Naive thymus-derived CD4-positive, alpha-beta T cell (primary cell): ENCODE measurements at regions of chr15 and their contacts with region 1.

Region 1: DNA sequence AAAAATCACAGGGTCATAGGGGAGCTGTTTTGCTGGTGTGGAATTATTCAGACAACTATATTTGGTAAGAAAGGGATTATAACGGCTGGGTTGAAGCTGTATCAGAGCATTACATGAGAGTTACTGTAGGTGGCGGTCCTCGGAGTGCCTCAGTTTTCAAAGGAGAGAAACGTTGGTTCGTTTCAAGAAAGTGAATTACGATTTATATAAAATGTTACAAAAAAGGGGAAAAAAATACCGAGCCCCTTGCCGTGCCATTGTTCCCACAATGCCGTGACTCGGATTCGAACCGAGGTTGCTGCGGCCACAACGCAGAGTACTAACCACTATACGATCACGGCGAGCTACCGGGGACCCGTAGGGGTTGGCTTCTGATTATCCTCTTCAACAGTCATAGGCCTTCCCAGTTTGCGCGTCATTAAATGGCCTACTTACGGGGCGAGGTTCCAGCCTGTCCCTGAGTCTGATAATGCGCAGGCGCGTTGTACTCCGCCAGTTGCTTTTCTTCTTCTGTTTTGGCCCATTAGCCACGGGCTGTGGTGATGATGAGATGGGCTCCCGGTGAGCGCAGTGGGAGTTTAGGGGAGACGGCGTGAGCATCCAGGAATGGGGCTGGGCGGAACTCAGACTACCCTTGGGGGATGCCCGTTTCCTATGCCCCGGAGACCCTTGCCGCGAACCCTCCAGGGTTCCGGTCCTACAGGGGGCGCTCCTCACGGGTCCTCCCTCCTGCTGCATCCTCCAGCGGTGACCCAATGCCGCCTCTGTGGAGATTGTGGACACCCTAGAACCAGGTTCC is 10.8 kb upstream of the SHF start:
- DNase-seq: peak; percentile 82 to 98 (median 98)
- ATAC-seq: peak; percentile 80
- H3K4me3 ChIP-seq: peak overlapping the region; percentile 69
- H3K4me3 Mint-ChIP-seq: no peak overlapping the region
- H3K27ac ChIP-seq: peak overlapping the region; percentile 90
- H3K27ac Mint-ChIP-seq: no peak overlapping the region
- H3K4me1 ChIP-seq: peaks cover 9 to 10% of the 10 kb centered on the region in 2 donors
- H3K4me1 Mint-ChIP-seq: peaks cover 0 to 16% (median 8%) of the 10 kb centered on the region in 7 donors
- H3K27me3 ChIP-seq: no peaks in the 10 kb centered on the region
- H3K27me3 Mint-ChIP-seq: peaks cover 0 to 11% (median 0%) of the 10 kb centered on the region in 5 donors

Region 2: DNA sequence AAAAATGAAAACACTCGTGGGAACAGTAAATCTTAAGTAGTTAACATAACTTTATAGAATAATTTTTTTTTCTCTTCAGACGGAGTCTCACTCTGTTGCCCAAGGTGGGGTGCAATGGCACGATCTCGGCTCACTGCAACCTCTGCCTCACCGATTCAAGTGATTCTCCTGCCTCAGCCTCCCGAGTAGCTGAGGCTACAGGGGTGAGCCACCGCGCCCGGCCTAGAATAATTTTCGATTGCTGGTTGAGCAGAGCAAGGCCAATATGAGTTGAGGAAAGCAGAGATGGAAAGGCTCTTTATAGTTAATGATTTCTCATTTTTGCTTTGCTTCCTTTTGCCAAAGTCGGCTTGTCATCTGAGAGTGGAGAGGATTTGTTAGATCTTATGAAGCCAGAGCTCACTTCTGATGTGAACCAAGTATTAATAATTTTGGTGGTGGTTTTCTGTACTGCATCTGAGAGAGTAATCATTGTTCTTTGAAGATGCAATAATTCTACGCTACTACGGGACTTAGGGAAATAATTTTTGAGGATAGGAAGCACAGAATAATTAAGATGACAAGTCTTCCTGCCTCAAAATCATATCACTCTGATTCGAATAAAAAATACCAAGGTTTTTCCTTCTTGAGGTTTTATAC is 911.6 kb before region 1 on chr15:
- CTCF ChIA-PET with region 1: no interaction called
- POLR2A ChIA-PET with region 1: no interaction called
- intact Hi-C with region 1: loop called (anchors 2 kb)
- DNase-seq: peak in 4 of 9 donors; percentile 9 to 30 (median 19)
- ATAC-seq: no peak
- H3K4me3 ChIP-seq: peak overlapping the region; percentile 85
- H3K4me3 Mint-ChIP-seq: peak overlapping the region; percentile 90 to 99 (median 96)
- H3K27ac ChIP-seq: peak overlapping the region; percentile 86
- H3K27ac Mint-ChIP-seq: peak overlapping the region; percentile 95 to 100 (median 99)
- H3K4me1 ChIP-seq: peaks cover 12 to 13% of the 10 kb centered on the region in 2 donors
- H3K4me1 Mint-ChIP-seq: peaks cover 30 to 50% (median 45%) of the 10 kb centered on the region in 7 donors
- H3K27me3 ChIP-seq: no peaks in the 10 kb centered on the region
- H3K27me3 Mint-ChIP-seq: peaks cover 0 to 17% (median 3%) of the 10 kb centered on the region in 5 donors

Region 3: GRCh38 chr15:44663409-44664308 is 534.9 kb before region 1 on chr15 and contains the start of gene SPG11:
- CTCF ChIA-PET with region 1: no interaction called
- POLR2A ChIA-PET with region 1: interaction called, 4 read pairs
- intact Hi-C with region 1: loop called (anchors 1 to 2 kb)
- DNase-seq: peak; percentile 81 to 95 (median 94)
- ATAC-seq: peak; percentile 91
- H3K4me3 ChIP-seq: peak within 1 kb of the TSS; percentile 85
- H3K4me3 Mint-ChIP-seq: peak within 1 kb of the TSS; percentile 84 to 99 (median 98)
- H3K27ac ChIP-seq: peak within 1 kb of the TSS; percentile 91
- H3K27ac Mint-ChIP-seq: peak within 1 kb of the TSS; percentile 94 to 99 (median 96)
- H3K4me1 ChIP-seq: peaks cover 35 to 53% of the 10 kb centered on the region in 2 donors
- H3K4me1 Mint-ChIP-seq: peaks cover 41 to 77% (median 69%) of the 10 kb centered on the region in 7 donors
- H3K27me3 ChIP-seq: no peaks in the 10 kb centered on the region
- H3K27me3 Mint-ChIP-seq: no peaks in the 10 kb centered on the region
- total RNA-seq, gene SPG11: 92.2 to 137 (median 131) TPM

Region 4: DNA sequence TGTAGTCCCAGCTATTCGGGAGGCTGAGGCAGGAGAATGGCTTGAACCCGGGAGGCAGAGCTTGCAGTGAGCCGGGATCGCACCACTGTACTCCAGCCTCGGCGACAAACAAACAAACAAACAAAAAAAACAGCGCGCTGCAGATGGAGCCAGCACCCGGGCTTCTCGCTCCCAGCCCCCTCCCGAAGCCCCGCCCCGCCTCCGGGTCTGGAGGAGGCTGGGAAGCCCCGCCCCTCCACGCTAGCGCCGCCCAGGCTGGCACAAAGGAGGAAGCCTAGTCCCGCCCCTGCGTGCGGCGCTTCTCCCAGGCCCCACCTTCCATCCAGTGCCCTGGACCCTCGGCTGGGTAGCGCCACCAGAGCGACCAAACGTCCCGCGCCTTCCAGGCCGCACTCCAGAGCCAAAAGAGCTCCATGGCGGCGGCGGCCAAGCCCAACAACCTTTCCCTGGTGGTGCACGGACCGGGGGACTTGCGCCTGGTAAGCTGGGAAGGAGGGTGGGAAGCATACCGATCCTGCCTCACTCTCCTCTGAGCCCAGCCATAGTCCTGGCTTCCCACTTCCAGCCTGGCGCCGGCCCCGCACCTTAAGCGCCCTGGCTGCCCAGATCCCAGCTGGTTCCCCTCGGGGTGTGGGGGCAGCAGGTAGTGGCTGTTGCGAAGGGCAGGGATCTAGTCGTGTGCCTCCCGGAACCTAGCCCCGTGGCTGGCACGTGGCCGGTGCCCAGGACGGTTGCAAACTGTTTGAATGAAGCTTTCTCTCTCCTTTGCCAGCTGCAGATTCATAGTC is 175.5 kb before region 1 on chr15 and contains the start of gene SORD:
- CTCF ChIA-PET with region 1: no interaction called
- POLR2A ChIA-PET with region 1: interaction called, 3 read pairs
- intact Hi-C with region 1: loop called in 1 of 2 experiments (anchors 2 kb)
- DNase-seq: peak; percentile 77 to 96 (median 83)
- ATAC-seq: peak; percentile 99
- H3K4me3 ChIP-seq: peak within 1 kb of the TSS; percentile 83
- H3K4me3 Mint-ChIP-seq: peak within 1 kb of the TSS; percentile 80 to 93 (median 88)
- H3K27ac ChIP-seq: peak within 1 kb of the TSS; percentile 42
- H3K27ac Mint-ChIP-seq: peak within 1 kb of the TSS; percentile 14 to 86 (median 60)
- H3K4me1 ChIP-seq: peaks cover 8 to 10% of the 10 kb centered on the region in 2 donors
- H3K4me1 Mint-ChIP-seq: peaks cover 12 to 32% (median 17%) of the 10 kb centered on the region in 7 donors
- H3K27me3 ChIP-seq: no peaks in the 10 kb centered on the region
- H3K27me3 Mint-ChIP-seq: peaks cover 12 to 28% (median 21%) of the 10 kb centered on the region in 5 donors
- total RNA-seq, gene SORD: 2.7 to 7.8 (median 6.4) TPM

Region 5: GRCh38 chr15:45166834-45167630 is 31.5 kb before region 1 on chr15:
- CTCF ChIA-PET with region 1: interaction called, 15 read pairs
- POLR2A ChIA-PET with region 1: interaction called, 77 read pairs
- intact Hi-C with region 1: loop called (anchors 1 kb)
- DNase-seq: peak; percentile 58 to 82 (median 78)
- ATAC-seq: peak; percentile 95
- H3K4me3 ChIP-seq: peak overlapping the region; percentile 70
- H3K4me3 Mint-ChIP-seq: peak overlapping the region; percentile 62 to 86 (median 74)
- H3K27ac ChIP-seq: peak overlapping the region; percentile 95
- H3K27ac Mint-ChIP-seq: peak overlapping the region; percentile 62 to 92 (median 83)
- H3K4me1 ChIP-seq: peaks cover 10 to 13% of the 10 kb centered on the region in 2 donors
- H3K4me1 Mint-ChIP-seq: peaks cover 0 to 31% (median 18%) of the 10 kb centered on the region in 7 donors
- H3K27me3 ChIP-seq: no peaks in the 10 kb centered on the region
- H3K27me3 Mint-ChIP-seq: no peaks in the 10 kb centered on the region

Region 6: DNA sequence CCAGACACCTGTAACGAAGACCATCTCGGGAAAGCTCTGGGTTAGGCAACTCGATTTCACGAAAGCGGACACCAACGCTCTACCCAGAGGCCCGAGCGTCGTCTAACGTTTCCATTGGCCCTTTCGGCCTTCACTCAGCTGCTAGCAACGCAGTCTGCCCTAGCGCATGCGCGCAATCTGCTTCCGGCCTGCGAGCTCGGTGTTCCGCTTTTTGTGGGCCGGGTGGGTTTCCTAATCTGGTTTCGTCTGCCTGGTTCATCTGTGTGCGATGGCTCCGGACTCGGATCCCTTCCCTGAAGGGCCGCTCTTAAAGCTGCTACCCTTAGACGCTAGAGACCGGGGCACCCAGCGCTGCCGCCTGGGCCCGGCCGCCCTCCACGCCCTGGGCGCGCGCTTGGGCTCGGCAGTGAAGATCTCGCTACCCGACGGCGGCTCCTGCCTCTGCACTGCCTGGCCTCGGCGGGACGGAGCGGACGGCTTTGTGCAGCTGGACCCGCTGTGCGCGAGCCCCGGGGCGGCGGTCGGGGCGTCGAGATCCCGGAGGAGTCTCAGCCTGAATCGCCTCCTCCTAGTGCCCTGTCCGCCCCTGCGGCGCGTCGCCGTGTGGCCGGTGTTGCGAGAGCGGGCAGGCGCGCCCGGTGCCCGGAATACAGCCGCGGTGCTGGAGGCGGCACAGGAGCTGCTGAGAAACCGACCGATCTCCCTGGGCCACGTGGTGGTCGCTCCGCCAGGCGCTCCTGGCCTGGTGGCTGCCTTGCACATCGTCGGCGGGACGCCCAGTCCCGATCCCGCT is 203.8 kb after region 1 on chr15:
- CTCF ChIA-PET with region 1: interaction called, 7 read pairs
- POLR2A ChIA-PET with region 1: interaction called, 19 read pairs
- intact Hi-C with region 1: loop called (anchors 1 kb)
- DNase-seq: peak; percentile 84 to 98 (median 96)
- ATAC-seq: peak; percentile 96
- H3K4me3 ChIP-seq: peak overlapping the region; percentile 86
- H3K4me3 Mint-ChIP-seq: peak overlapping the region; percentile 88 to 99 (median 96)
- H3K27ac ChIP-seq: peak overlapping the region; percentile 83
- H3K27ac Mint-ChIP-seq: peak overlapping the region; percentile 91 to 98 (median 95)
- H3K4me1 ChIP-seq: peaks cover 8 to 22% of the 10 kb centered on the region in 2 donors
- H3K4me1 Mint-ChIP-seq: peaks cover 18 to 40% (median 38%) of the 10 kb centered on the region in 7 donors
- H3K27me3 ChIP-seq: no peaks in the 10 kb centered on the region
- H3K27me3 Mint-ChIP-seq: peaks cover 0 to 14% (median 0%) of the 10 kb centered on the region in 5 donors

Region 7: DNA sequence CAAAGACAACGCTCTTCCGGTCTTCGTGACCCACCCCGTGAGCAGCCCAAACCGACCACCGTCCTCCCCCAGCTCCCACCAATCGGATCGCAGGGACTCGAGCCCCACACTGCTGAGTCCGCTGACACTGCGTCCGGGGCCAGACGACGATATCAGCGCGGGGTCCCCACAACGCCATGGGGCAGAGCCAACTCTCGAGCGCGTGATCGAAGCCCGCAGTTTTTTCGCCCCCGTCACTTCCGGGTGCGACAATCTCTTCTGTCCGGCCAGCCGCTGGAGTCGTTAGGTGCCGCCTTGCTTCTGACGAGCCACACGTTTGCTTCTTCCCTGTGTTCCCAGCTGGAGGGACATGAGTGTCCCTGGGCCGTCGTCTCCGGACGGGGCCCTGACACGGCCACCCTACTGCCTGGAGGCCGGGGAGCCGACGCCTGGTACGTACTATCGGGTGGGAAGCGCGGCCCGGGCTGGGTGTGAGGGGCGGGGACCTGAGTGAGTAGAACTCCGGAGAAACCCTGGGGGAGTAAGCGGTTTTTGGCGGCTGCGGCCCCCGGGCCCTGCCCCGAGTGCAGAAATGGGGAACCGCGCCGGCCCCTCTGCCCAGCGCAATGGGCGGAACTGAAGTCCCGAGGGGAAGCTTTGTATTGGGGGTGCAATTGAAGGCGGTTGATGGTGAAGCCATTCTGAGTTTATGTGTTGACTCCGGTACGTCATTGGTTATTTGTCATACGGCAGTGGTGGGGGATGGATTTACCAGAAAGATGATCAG is 388.7 kb after region 1 on chr15 and contains the start of gene BLOC1S6:
- CTCF ChIA-PET with region 1: no interaction called
- POLR2A ChIA-PET with region 1: interaction called, 16 read pairs
- intact Hi-C with region 1: loop called (anchors 1 kb)
- DNase-seq: peak; percentile 81 to 91 (median 87)
- ATAC-seq: peak; percentile 87
- H3K4me3 ChIP-seq: peak within 1 kb of the TSS; percentile 87
- H3K4me3 Mint-ChIP-seq: peak within 1 kb of the TSS; percentile 96 to 100 (median 98)
- H3K27ac ChIP-seq: peak within 1 kb of the TSS; percentile 97
- H3K27ac Mint-ChIP-seq: peak within 1 kb of the TSS; percentile 100
- H3K4me1 ChIP-seq: peaks cover 25 to 26% of the 10 kb centered on the region in 2 donors
- H3K4me1 Mint-ChIP-seq: peaks cover 27 to 55% (median 38%) of the 10 kb centered on the region in 7 donors
- H3K27me3 ChIP-seq: no peaks in the 10 kb centered on the region
- H3K27me3 Mint-ChIP-seq: no peaks in the 10 kb centered on the region
- total RNA-seq, gene BLOC1S6: 34.4 to 63.9 (median 50.9) TPM